ENCODE measurements at regions of chr2 and their contacts with region 1.

Region 1: DNA sequence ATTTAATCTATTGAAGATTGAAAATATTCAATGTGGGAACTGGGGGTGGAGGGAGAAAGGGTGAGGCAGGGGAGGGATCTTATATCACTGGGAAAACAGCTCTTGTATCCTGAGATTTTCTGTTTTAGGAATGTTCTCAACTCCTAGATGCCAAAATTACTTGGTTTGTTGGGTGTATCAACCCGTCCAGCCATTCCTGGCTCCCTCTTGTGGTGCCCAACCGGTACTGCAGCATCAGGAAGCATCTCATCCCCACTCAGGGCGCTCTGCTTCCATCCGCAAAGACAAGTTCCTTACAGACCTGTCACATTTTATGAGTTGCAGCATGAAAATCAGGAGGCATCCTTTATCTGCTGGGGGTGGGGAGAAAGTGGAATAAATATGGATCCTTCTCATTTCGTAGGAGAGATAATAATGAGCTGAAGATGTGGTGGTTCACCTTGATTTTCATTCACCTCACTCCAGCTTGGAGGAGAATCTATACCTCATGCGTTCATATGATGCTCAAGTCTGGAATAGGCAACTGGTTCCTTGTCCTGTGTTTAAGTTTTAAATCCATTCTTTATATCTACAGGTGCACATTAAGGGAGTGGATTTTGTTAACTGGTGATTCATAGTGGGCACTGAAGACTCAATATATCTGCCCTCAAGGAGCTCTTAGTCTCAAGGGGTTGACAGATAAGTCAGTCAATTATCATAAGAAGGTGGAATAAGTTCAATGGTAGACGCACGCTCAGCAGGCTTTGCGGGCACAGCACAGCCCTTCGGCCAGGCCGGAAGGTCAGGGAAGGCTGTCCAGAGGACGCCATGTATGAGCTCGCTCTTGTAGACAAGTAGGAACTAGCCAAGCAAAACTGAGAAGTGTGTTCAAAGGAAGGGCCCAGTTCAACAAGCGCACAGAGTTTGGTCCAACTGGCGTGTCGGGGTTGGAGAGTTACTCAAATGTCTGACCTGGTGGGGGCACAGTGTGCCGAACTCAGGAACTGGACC is 127.3 kb downstream of the RNF144A start:
- DNase-seq: peak; percentile 69
- ATAC-seq: peak; percentile 60
- H3K4me3 Mint-ChIP-seq: no peak overlapping the region
- H3K27ac Mint-ChIP-seq: no peak overlapping the region
- H3K4me1 Mint-ChIP-seq: peaks cover 10% of the 10 kb centered on the region
- H3K27me3 Mint-ChIP-seq: no peaks in the 10 kb centered on the region

Region 2: GRCh38 chr2:6845312-6845711 is 199.2 kb before region 1 on chr2:
- CTCF ChIA-PET with region 1: interaction called, 10 read pairs
- POLR2A ChIA-PET with region 1: no interaction called
- DNase-seq: no peak
- ATAC-seq: peak; percentile 19
- H3K4me3 Mint-ChIP-seq: no peak overlapping the region
- H3K27ac Mint-ChIP-seq: no peak overlapping the region
- H3K4me1 Mint-ChIP-seq: peaks cover 34% of the 10 kb centered on the region
- H3K27me3 Mint-ChIP-seq: no peaks in the 10 kb centered on the region

Region 3: DNA sequence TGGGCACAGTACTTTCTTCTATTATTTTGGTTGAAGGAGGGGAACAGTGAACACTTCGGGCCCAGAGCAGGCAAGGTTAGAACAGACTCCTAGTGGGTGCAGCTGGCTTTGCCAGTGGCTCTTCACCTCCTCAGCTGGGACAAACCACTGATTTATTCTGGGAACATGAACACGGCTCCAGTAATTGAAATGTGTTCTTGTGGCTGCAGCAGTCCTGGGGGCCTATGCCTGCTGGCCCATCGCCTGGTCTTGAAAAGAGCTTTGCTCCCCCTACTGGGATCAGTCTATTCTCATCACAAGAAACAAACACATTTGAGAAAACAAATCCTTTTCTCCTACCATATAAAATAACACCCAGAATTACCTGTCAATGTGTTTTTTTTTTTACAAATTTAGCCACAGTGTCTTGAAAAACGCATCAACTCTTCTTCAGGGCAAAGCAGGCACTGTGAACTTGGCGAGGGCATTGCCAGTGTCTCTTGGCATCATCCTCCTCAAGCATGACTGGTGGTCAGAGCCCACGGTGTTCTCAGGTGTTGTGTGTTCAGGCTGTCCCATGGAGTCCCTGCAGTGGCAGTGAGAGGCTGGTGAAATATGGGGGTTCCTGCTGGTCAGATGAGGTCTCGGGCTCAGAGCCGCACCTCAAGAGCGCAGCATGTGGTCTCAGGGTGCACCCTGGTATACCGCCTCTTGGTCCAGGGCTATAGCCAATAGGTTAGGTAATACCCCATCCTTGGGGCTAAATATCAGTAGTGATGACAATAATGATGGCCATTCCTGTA is 76.0 kb before region 1 on chr2:
- CTCF ChIA-PET with region 1: no interaction called
- POLR2A ChIA-PET with region 1: no interaction called
- DNase-seq: no peak
- ATAC-seq: no peak
- H3K4me3 Mint-ChIP-seq: no peak overlapping the region
- H3K27ac Mint-ChIP-seq: no peak overlapping the region
- H3K4me1 Mint-ChIP-seq: peaks cover 17% of the 10 kb centered on the region
- H3K27me3 Mint-ChIP-seq: no peaks in the 10 kb centered on the region

Region 4: DNA sequence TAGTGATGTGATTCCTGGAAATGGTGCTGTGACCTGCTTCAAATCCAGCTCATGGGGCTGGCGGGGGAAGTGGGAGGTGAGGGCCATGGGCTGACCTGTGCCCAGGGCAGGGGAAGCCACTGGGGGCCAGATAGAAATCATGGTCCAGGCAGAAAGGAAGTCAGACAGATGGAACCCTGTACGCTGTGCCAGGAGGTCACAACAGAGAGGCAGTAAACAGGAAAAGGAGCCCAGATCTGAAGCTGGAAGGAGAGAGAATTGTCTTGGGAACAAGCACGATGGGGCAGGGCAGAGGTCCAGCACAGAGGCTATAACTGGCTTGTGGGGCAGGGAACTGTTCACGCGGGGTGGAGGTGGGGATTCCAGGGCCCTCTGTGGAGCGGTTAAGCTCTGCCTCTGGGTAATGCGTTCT is 51.3 kb before region 1 on chr2:
- CTCF ChIA-PET with region 1: no interaction called
- POLR2A ChIA-PET with region 1: no interaction called
- DNase-seq: no peak
- ATAC-seq: no peak
- H3K4me3 Mint-ChIP-seq: no peak overlapping the region
- H3K27ac Mint-ChIP-seq: peak overlapping the region; percentile 27
- H3K4me1 Mint-ChIP-seq: peaks cover 6% of the 10 kb centered on the region
- H3K27me3 Mint-ChIP-seq: no peaks in the 10 kb centered on the region

Region 5: GRCh38 chr2:7014174-7014640 is 30.3 kb before region 1 on chr2:
- CTCF ChIA-PET with region 1: interaction called, 17 read pairs
- POLR2A ChIA-PET with region 1: no interaction called
- DNase-seq: peak; percentile 32
- ATAC-seq: peak; percentile 54
- H3K4me3 Mint-ChIP-seq: no peak overlapping the region
- H3K27ac Mint-ChIP-seq: no peak overlapping the region
- H3K4me1 Mint-ChIP-seq: peaks cover 12% of the 10 kb centered on the region
- H3K27me3 Mint-ChIP-seq: no peaks in the 10 kb centered on the region

Region 6: DNA sequence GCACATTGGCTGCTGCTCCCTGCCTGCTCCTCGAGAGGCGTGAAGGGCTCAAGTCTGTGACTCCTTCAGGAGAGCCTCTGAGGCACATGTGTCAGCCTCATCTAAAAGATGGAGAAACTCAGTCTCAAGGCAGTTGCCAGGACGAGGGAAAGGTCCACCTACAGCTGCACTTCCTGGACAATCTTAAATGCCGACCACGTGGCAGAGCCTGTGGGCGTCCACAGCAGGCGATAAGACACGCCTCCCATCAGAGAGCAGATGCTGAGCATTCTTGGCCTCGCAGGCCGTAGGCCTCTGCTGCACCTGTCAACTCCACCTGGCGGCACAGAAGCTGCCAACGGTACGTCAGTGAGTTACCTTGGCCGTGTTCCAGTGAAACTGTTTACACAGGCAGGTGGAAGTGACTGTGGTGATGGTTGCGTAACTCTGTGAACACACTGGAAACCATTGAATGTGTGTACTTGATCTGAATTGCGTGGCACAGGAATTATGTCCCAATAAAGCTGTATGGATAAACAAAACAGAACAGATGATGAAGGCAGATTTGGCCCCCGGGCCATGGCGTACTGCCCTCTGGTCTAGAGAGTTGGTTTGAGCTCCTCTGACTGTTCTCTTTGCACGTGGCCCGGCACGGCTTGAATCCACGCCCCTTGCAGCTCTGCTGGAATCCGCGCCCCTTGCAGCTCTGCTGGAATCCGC is 12.9 kb before region 1 on chr2:
- CTCF ChIA-PET with region 1: interaction called, 20 read pairs
- POLR2A ChIA-PET with region 1: interaction called, 5 read pairs
- DNase-seq: no peak
- ATAC-seq: no peak
- H3K4me3 Mint-ChIP-seq: no peak overlapping the region
- H3K27ac Mint-ChIP-seq: peak overlapping the region; percentile 21
- H3K4me1 Mint-ChIP-seq: peaks cover 10% of the 10 kb centered on the region
- H3K27me3 Mint-ChIP-seq: no peaks in the 10 kb centered on the region